Dendritic cell treated with granulocyte-macrophage colony-stimulating factor and Interleukin-4, amounts not matched to agents 40 ng/mL and 50 ng/mL, for 4 days (primary cell): ENCODE measurements at regions of chr19 and their contacts with region 1.

Region 1: GRCh38 chr19:7970716-7971448 is 27.4 kb upstream of the TIMM44 start:
- H3K4me3 Mint-ChIP-seq: no peak overlapping the region
- H3K27ac Mint-ChIP-seq: no peak overlapping the region
- H3K4me1 Mint-ChIP-seq: no peaks in the 10 kb centered on the region
- H3K27me3 Mint-ChIP-seq: no peaks in the 10 kb centered on the region

Region 2: GRCh38 chr19:7868676-7869452 is 102.0 kb before region 1 on chr19:
- intact Hi-C with region 1: no loop called
- H3K4me3 Mint-ChIP-seq: peak overlapping the region; percentile 62
- H3K27ac Mint-ChIP-seq: peak overlapping the region; percentile 27
- H3K4me1 Mint-ChIP-seq: peaks cover 56% of the 10 kb centered on the region
- H3K27me3 Mint-ChIP-seq: peaks cover 79% of the 10 kb centered on the region

Region 3: GRCh38 chr19:8005534-8006256 is 34.8 kb after region 1 on chr19 and contains the start of gene ELAVL1:
- intact Hi-C with region 1: loop called (anchors 2 kb)
- H3K4me3 Mint-ChIP-seq: peak within 1 kb of the TSS; percentile 79
- H3K27ac Mint-ChIP-seq: peak within 1 kb of the TSS; percentile 85
- H3K4me1 Mint-ChIP-seq: peaks cover 31% of the 10 kb centered on the region
- H3K27me3 Mint-ChIP-seq: no peaks in the 10 kb centered on the region